ENCODE measurements at regions of chr5 and their contacts with region 1.

Region 1: GRCh38 chr5:10627160-10627701 is 63.4 kb downstream of the ANKRD33B start:
- DNase-seq: no peak
- H3K4me3 ChIP-seq: peak overlapping the region; percentile 60
- H3K27ac ChIP-seq: peak overlapping the region; percentile 53
- H3K4me1 ChIP-seq: peaks cover 41% of the 10 kb centered on the region
- CTCF ChIP-seq: no peak

Region 2: DNA sequence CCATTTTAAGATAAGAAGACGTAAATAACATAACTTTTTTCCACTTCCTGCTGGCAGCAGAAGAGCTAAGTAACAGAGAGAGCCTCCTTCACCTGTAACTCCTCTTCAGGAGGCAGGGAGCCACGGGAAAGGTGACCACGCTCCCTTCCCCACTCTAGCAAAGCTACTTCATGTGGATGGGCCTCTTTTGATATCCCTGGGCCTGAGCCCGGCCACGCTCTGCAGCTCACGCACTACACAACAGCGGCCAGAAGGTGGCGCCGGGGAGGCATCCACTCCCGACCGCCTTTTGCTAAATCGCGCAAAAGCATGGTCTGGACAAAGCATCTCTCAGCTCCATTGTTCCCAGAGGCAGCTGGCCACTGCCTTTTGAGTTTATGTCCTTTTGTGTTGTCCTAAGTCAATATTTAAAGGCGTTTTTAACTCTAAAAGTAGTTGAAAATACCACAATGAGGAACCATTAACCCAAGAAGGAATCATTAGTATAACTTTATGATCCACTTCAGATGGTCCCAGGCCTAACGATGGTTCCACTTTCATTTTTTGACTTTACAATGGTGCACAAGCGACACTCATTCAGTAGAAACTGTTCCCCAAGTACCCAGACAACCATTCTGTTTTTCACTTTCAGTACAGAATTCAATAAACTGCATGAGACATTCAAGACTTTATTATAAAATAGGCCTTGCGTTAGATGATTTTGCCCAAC is 343.1 kb before region 1 on chr5:
- CTCF ChIA-PET with region 1: interaction called, 4 read pairs
- POLR2A ChIA-PET with region 1: no interaction called
- intact Hi-C with region 1: loop called (anchors 2 kb)
- DNase-seq: peak; percentile 87
- H3K4me3 ChIP-seq: peak overlapping the region; percentile 30
- H3K27ac ChIP-seq: no peak overlapping the region
- H3K4me1 ChIP-seq: peaks cover 22% of the 10 kb centered on the region
- CTCF ChIP-seq: peak; percentile 94

Region 3: DNA sequence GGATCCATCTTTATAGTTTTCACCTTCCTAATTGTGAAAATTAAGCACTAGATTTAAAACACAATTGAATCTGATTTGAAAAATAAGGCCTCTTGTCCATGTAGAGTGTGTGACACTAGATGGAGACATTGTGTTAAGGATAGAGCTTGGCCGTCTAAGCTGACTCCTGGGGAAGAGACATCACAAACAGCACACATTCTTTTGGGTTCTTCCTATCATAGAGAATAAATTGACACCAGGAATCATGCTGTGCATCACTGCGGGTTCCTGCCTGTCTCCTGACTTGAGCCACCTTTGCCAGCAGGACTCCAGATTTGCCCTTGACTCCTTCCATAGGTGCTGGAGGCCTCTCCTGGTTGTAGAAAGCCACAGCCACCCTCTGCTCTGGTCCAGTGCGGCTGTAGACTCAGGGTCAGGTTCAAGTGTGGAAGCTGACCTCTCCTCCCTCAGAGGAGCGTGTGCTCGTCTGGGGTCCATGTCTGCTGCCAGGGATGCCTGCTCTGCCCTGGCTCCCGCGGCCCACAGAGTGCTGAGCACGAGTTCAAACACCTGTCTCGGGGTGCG is 174.4 kb before region 1 on chr5:
- CTCF ChIA-PET with region 1: interaction called, 16 read pairs
- POLR2A ChIA-PET with region 1: interaction called, 12 read pairs
- intact Hi-C with region 1: loop called (anchors 1 kb)
- DNase-seq: peak; percentile 82
- H3K4me3 ChIP-seq: no peak overlapping the region
- H3K27ac ChIP-seq: no peak overlapping the region
- H3K4me1 ChIP-seq: peaks cover 5% of the 10 kb centered on the region
- CTCF ChIP-seq: peak; percentile 94

Region 4: GRCh38 chr5:10505517-10506095 is 121.6 kb before region 1 on chr5:
- CTCF ChIA-PET with region 1: no interaction called
- POLR2A ChIA-PET with region 1: no interaction called
- intact Hi-C with region 1: loop called (anchors 5 kb)
- DNase-seq: peak; percentile 86
- H3K4me3 ChIP-seq: no peak overlapping the region
- H3K27ac ChIP-seq: peak overlapping the region; percentile 43
- H3K4me1 ChIP-seq: peaks cover 25% of the 10 kb centered on the region
- CTCF ChIP-seq: no peak

Region 5: GRCh38 chr5:10695055-10695649 is 67.9 kb after region 1 on chr5:
- CTCF ChIA-PET with region 1: no interaction called
- POLR2A ChIA-PET with region 1: no interaction called
- intact Hi-C with region 1: no loop called
- DNase-seq: peak; percentile 74
- H3K4me3 ChIP-seq: no peak overlapping the region
- H3K27ac ChIP-seq: no peak overlapping the region
- H3K4me1 ChIP-seq: peaks cover 53% of the 10 kb centered on the region
- CTCF ChIP-seq: peak; percentile 94

Region 6: GRCh38 chr5:10761166-10761932 is 134.1 kb after region 1 on chr5 and contains the start of gene DAP:
- CTCF ChIA-PET with region 1: no interaction called
- POLR2A ChIA-PET with region 1: no interaction called
- intact Hi-C with region 1: loop called (anchors 5 kb)
- DNase-seq: peak; percentile 95
- H3K4me3 ChIP-seq: peak within 1 kb of the TSS; percentile 85
- H3K27ac ChIP-seq: peak within 1 kb of the TSS; percentile 75
- H3K4me1 ChIP-seq: peaks cover 44% of the 10 kb centered on the region
- CTCF ChIP-seq: no peak
- total RNA-seq, gene DAP: 15.9 and 21.5 TPM in 2 replicates

Region 7: GRCh38 chr5:11564706-11565105 is 937.5 kb after region 1 on chr5:
- CTCF ChIA-PET with region 1: no interaction called
- POLR2A ChIA-PET with region 1: no interaction called
- intact Hi-C with region 1: no loop called
- DNase-seq: no peak
- H3K4me3 ChIP-seq: no peak overlapping the region
- H3K27ac ChIP-seq: no peak overlapping the region
- H3K4me1 ChIP-seq: no peaks in the 10 kb centered on the region
- CTCF ChIP-seq: no peak

Measured in OCI-LY7 (cell line).